ENCODE measurements at regions of chr4 and their contacts with region 1.

Region 1: GRCh38 chr4:77120886-77121508 is 36.0 kb upstream of the CCNG2 start:
- DNase-seq: no peak
- H3K4me3 ChIP-seq: no peak overlapping the region
- H3K27ac ChIP-seq: no peak overlapping the region
- H3K4me1 ChIP-seq: no peaks in the 10 kb centered on the region
- H3K27me3 ChIP-seq: no peaks in the 10 kb centered on the region
- CTCF ChIP-seq: no peak

Region 2: GRCh38 chr4:76830964-76831703 is 289.9 kb before region 1 on chr4:
- CTCF ChIA-PET with region 1: no interaction called
- POLR2A ChIA-PET with region 1: no interaction called
- intact Hi-C with region 1: no loop called
- DNase-seq: peak; percentile 26 to 71
- H3K4me3 ChIP-seq: peak overlapping the region; percentile 33; the same call in 1 of the 2 replicates
- H3K27ac ChIP-seq: peak overlapping the region; percentile 42; the same call in 1 of the 2 replicates
- H3K4me1 ChIP-seq: peaks cover 16% of the 10 kb centered on the region
- H3K27me3 ChIP-seq: no peaks in the 10 kb centered on the region
- CTCF ChIP-seq: no peak

Region 3: DNA sequence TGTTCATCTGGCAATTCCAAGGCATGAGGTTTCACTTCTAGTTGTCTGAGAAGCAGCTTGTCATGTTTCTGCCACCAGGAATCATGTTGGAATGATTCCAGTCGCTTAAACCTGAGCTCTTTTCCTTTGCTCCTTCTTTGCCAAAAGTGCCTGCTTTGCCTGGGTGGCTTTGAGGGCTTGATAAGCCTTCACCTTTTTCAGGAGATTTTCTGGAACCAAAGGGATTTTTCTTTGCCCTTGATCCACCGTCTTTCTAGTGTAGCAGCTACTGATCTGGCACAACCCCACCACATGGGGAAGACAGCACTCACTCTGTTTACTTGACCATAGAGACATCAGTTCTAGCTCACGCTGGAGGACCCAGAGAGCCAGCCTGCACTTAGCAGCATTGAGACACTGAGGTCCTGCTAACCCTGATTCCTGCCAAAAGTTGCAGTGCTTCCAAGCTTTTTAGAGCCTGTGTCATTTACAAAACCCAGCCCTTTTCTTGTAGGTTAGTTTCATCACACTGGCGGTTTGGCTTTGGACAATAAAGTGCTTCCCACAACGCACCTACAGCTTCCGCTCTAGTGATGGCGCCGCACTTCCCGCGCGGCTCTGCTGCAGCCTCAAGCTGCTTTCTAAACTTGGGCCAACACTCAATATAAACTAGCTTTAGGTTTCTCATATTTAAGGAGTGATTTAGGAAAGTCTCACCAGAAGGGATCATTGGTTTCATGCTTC is 38.0 kb before region 1 on chr4:
- CTCF ChIA-PET with region 1: interaction called, 11 read pairs
- POLR2A ChIA-PET with region 1: no interaction called
- intact Hi-C with region 1: no loop called
- DNase-seq: no peak
- H3K4me3 ChIP-seq: no peak overlapping the region
- H3K27ac ChIP-seq: no peak overlapping the region
- H3K4me1 ChIP-seq: no peaks in the 10 kb centered on the region
- H3K27me3 ChIP-seq: no peaks in the 10 kb centered on the region
- CTCF ChIP-seq: no peak

Region 4: DNA sequence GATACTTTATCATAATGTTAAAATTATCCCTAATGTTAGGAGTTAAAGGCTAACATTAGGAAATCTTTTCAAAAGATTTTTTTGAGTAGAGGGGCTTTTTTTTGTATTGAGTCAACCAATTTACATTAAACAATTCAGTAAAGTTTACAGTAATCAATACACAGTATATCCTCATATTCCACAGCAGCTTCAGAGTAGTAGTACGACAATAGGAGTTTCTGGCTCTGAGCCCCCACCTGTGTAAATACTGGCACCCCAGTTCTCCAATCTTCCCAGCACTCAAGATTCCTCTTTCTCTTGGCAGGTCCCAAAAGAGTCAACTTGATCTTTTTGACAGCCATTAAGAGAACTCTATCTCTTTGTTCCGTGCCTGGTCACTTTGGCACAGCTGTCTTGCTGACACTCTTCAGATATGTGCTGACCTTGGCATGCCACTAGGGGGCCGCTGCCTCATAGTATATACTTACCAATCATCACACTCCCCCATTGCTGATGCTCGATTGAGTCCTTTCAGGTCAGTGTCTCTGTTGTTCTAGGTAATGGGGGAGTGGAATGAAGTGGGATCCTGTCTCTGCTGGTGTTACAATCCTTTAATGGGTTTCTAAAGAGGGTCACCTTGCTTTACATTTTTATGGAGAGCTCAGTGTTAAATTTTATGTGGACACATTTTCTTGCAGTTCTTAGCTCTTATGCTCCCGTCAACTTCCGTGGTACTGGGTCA is 25.7 kb before region 1 on chr4:
- CTCF ChIA-PET with region 1: no interaction called
- POLR2A ChIA-PET with region 1: no interaction called
- intact Hi-C with region 1: no loop called
- DNase-seq: peak in 1 of 2 experiments; percentile 30
- H3K4me3 ChIP-seq: no peak overlapping the region
- H3K27ac ChIP-seq: no peak overlapping the region
- H3K4me1 ChIP-seq: no peaks in the 10 kb centered on the region
- H3K27me3 ChIP-seq: no peaks in the 10 kb centered on the region
- CTCF ChIP-seq: peak; percentile 68

Region 5: GRCh38 chr4:77190053-77190452 is 69.1 kb after region 1 on chr4:
- CTCF ChIA-PET with region 1: no interaction called
- POLR2A ChIA-PET with region 1: no interaction called
- intact Hi-C with region 1: loop called (anchors 2 kb)
- DNase-seq: peak; percentile 31 to 85
- H3K4me3 ChIP-seq: no peak overlapping the region
- H3K27ac ChIP-seq: peak overlapping the region; percentile 57
- H3K4me1 ChIP-seq: peaks cover 23% of the 10 kb centered on the region
- H3K27me3 ChIP-seq: no peaks in the 10 kb centered on the region
- CTCF ChIP-seq: no peak; the same call in 1 of the 2 replicates

Region 6: GRCh38 chr4:77849278-77849965 is 728.4 kb after region 1 on chr4:
- CTCF ChIA-PET with region 1: no interaction called
- POLR2A ChIA-PET with region 1: no interaction called
- intact Hi-C with region 1: no loop called
- DNase-seq: no peak
- H3K4me3 ChIP-seq: no peak overlapping the region
- H3K27ac ChIP-seq: no peak overlapping the region
- H3K4me1 ChIP-seq: no peaks in the 10 kb centered on the region
- H3K27me3 ChIP-seq: no peaks in the 10 kb centered on the region
- CTCF ChIP-seq: no peak

Measured in PC-9 (cell line).